B cell (primary cell): ENCODE measurements at regions of chr17 and their contacts with region 1.

Region 1: GRCh38 chr17:57243171-57243948 is 13.0 kb upstream of the MSI2 start:
- DNase-seq: peak; percentile 84
- ATAC-seq: peak; percentile 95
- H3K4me3 ChIP-seq: no peak overlapping the region
- H3K4me3 Mint-ChIP-seq: no peak overlapping the region
- H3K27ac ChIP-seq: no peak overlapping the region
- H3K27ac Mint-ChIP-seq: no peak overlapping the region
- H3K4me1 ChIP-seq: peaks cover 0 to 3% of the 10 kb centered on the region in 2 donors
- H3K4me1 Mint-ChIP-seq: no peaks in the 10 kb centered on the region
- H3K27me3 ChIP-seq: peaks cover 0 to 9% (median 4%) of the 10 kb centered on the region in 4 experiments
- H3K27me3 Mint-ChIP-seq: peaks cover 3% of the 10 kb centered on the region
- CTCF ChIP-seq: peak; percentile 100

Region 2: DNA sequence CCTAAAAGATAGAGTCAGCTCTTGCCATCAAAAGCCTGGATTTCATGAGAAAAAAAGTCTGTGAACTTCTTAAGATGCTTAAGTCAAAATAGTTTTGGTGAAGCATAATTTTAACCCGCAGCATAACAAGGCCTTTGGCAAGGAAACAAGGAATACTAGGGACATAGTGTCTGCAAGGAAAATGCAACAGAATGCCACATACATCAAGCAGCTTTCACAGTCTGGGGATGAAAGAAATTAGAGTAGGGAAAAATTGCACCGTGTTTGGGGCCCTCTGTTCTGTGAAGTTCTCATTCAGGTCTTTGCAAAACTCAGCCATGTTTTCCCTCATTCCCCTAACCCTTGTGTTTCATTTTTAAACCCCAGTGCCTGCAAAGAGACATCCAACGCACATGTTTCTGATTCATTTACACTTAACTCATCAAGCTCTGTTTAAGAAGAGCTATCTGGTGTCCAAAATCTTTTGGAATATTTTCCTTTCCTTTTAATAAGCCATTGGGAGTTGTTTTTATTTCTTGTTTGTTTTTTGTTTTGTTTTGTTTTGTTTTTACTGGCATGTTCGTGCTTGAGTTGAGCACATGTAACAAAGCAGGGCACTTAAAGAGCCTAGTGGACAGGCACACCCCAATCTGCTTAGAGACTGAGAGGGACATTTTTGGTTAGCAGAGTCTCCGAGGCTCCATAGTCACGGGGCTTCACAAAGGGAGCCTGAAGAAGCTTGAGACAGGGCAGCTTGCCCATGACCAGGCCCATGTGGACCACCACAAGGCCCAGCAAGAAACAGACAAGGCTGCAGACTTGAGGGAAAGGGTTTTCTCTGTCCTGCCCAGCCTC is 973.6 kb before region 1 on chr17:
- CTCF ChIA-PET with region 1: no interaction called
- POLR2A ChIA-PET with region 1: no interaction called
- intact Hi-C with region 1: no loop called
- DNase-seq: no peak
- ATAC-seq: no peak
- H3K4me3 ChIP-seq: no peak overlapping the region
- H3K4me3 Mint-ChIP-seq: no peak overlapping the region
- H3K27ac ChIP-seq: no peak overlapping the region
- H3K27ac Mint-ChIP-seq: no peak overlapping the region
- H3K4me1 ChIP-seq: no peaks in the 10 kb centered on the region
- H3K4me1 Mint-ChIP-seq: no peaks in the 10 kb centered on the region
- H3K27me3 ChIP-seq: no peaks in the 10 kb centered on the region
- H3K27me3 Mint-ChIP-seq: no peaks in the 10 kb centered on the region
- CTCF ChIP-seq: no peak

Region 3: GRCh38 chr17:57261084-57261461 is 17.7 kb after region 1 on chr17:
- CTCF ChIA-PET with region 1: interaction called, 30 read pairs
- POLR2A ChIA-PET with region 1: no interaction called
- intact Hi-C with region 1: no loop called
- DNase-seq: peak; percentile 23
- ATAC-seq: no peak
- H3K4me3 ChIP-seq: no peak overlapping the region
- H3K4me3 Mint-ChIP-seq: peak overlapping the region; percentile 84
- H3K27ac ChIP-seq: no peak overlapping the region
- H3K27ac Mint-ChIP-seq: peak overlapping the region; percentile 73
- H3K4me1 ChIP-seq: peaks cover 38 to 49% of the 10 kb centered on the region in 2 donors
- H3K4me1 Mint-ChIP-seq: peaks cover 58% of the 10 kb centered on the region
- H3K27me3 ChIP-seq: no peaks in the 10 kb centered on the region
- H3K27me3 Mint-ChIP-seq: no peaks in the 10 kb centered on the region
- CTCF ChIP-seq: no peak

Region 4: GRCh38 chr17:57408071-57408811 is 164.9 kb after region 1 on chr17:
- CTCF ChIA-PET with region 1: interaction called, 11 read pairs
- POLR2A ChIA-PET with region 1: no interaction called
- intact Hi-C with region 1: no loop called
- DNase-seq: peak; percentile 35
- ATAC-seq: peak; percentile 54
- H3K4me3 ChIP-seq: peak overlapping the region in 3 of 5 experiments; percentile 4 to 21 (median 15)
- H3K4me3 Mint-ChIP-seq: peak overlapping the region; percentile 40
- H3K27ac ChIP-seq: peak overlapping the region; percentile 29 to 40
- H3K27ac Mint-ChIP-seq: peak overlapping the region; percentile 23
- H3K4me1 ChIP-seq: peaks cover 16 to 22% of the 10 kb centered on the region in 2 donors
- H3K4me1 Mint-ChIP-seq: peaks cover 32% of the 10 kb centered on the region
- H3K27me3 ChIP-seq: no peaks in the 10 kb centered on the region
- H3K27me3 Mint-ChIP-seq: no peaks in the 10 kb centered on the region
- CTCF ChIP-seq: no peak

Region 5: DNA sequence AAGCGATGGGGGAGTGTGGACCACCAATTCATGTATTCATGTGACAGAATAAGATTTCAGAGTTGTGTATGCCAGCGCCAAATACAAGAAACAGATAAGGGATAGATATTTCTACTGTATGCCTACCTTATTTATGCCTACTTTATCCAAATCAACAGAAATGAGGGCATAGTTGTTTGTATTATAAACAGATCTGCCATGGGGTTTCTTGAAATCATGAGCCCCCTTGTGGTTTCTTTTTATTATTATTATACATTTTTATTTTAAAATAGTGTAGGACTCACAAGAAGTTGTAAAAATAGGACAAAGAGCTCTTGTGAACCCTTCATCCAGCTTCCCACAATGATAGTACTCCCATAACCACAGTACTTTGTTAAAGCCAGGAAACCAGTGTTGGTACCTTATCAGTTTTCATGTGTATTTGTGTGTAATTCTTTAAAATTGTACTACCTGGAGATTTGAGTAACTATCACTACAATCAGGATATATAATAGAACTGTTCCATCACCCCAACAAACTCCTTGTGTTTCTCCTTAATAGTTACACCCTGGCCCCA is 272.4 kb after region 1 on chr17:
- CTCF ChIA-PET with region 1: interaction called, 14 read pairs
- POLR2A ChIA-PET with region 1: no interaction called
- intact Hi-C with region 1: no loop called
- DNase-seq: no peak
- ATAC-seq: no peak
- H3K4me3 ChIP-seq: no peak overlapping the region
- H3K4me3 Mint-ChIP-seq: no peak overlapping the region
- H3K27ac ChIP-seq: no peak overlapping the region
- H3K27ac Mint-ChIP-seq: no peak overlapping the region
- H3K4me1 ChIP-seq: no peaks in the 10 kb centered on the region
- H3K4me1 Mint-ChIP-seq: peaks cover 6% of the 10 kb centered on the region
- H3K27me3 ChIP-seq: no peaks in the 10 kb centered on the region
- H3K27me3 Mint-ChIP-seq: no peaks in the 10 kb centered on the region
- CTCF ChIP-seq: peak; percentile 29

Region 6: DNA sequence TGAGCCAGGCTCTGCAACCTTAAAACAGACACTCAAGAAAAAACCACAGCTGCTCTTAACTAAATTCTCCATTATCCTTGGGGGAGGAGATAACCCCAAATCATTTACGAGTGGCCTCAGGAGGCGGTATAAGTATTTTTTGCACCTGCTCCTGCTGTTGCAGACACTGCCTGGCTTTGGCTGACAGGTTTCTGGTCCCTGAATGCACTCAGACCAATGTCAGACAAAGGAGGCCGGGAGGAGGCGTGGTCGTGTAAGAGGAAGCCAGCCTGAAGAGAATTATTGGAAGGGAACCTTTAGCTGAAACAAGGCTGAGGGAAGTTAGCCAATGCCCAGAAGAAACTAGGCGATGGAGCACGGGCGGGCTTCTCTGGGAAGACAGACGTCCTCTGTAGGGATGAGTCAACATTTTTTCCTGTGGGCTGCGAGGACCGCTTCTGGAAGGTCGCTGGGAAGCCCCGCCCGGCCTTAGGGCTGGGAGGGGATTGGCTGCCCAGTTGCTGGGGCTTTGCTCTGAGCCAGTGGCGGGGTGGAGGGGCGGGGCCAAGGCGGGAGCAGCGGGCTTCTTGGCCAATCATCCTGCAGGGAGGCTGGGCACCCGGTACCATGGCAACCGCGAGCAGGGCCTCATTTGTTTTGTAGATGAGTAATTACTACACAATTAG is 419.4 kb after region 1 on chr17:
- CTCF ChIA-PET with region 1: interaction called, 12 read pairs
- POLR2A ChIA-PET with region 1: no interaction called
- intact Hi-C with region 1: no loop called
- DNase-seq: peak; percentile 57
- ATAC-seq: peak; percentile 76
- H3K4me3 ChIP-seq: no peak overlapping the region
- H3K4me3 Mint-ChIP-seq: peak overlapping the region; percentile 72
- H3K27ac ChIP-seq: no peak overlapping the region
- H3K27ac Mint-ChIP-seq: peak overlapping the region; percentile 85
- H3K4me1 ChIP-seq: peaks cover 24 to 37% of the 10 kb centered on the region in 2 donors
- H3K4me1 Mint-ChIP-seq: peaks cover 35% of the 10 kb centered on the region
- H3K27me3 ChIP-seq: no peaks in the 10 kb centered on the region
- H3K27me3 Mint-ChIP-seq: no peaks in the 10 kb centered on the region
- CTCF ChIP-seq: no peak

Region 7: DNA sequence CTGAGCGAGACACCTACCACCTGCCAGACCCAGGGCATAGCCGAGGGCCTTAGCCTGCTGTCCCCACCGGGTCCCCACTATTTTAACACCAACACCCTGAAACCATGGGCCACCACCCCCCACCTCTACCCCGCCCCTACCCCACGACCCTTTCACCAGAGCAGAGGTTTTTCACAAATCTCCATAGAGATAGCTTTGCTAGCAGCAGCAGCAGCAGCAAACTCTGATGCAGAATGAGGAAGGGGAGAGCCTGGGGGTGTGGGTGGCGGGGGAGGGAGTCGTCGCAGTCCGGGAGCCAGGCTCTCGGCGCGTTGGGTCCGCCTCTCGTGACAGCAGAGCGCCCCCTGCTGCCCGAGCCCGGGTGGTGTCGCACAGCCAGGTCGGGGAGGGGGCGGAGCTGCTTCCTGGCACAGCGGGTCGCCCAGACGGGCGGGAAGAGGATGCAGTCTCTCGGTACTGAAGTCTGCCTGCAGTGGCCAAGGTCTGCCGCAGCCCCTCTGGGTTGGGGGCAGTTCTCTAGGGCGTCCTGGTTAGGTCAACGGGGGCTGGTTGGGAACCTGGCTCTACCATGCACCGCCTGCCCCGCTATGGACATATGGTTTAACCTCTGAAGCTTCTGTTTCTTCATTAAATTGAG is 539.9 kb after region 1 on chr17:
- CTCF ChIA-PET with region 1: interaction called, 15 read pairs
- POLR2A ChIA-PET with region 1: no interaction called
- intact Hi-C with region 1: loop called (anchors 1 kb)
- DNase-seq: peak; percentile 68
- ATAC-seq: peak; percentile 70
- H3K4me3 ChIP-seq: peak overlapping the region in 2 of 5 experiments; percentile 11
- H3K4me3 Mint-ChIP-seq: no peak overlapping the region
- H3K27ac ChIP-seq: no peak overlapping the region
- H3K27ac Mint-ChIP-seq: no peak overlapping the region
- H3K4me1 ChIP-seq: peaks cover 7 to 9% of the 10 kb centered on the region in 2 donors
- H3K4me1 Mint-ChIP-seq: peaks cover 1% of the 10 kb centered on the region
- H3K27me3 ChIP-seq: peaks cover 0 to 20% (median 6%) of the 10 kb centered on the region in 4 experiments
- H3K27me3 Mint-ChIP-seq: peaks cover 28% of the 10 kb centered on the region
- CTCF ChIP-seq: peak; percentile 75